Common myeloid progenitor, CD34-positive (primary cell): ENCODE measurements at regions of chr1 and their contacts with region 1.

Region 1: DNA sequence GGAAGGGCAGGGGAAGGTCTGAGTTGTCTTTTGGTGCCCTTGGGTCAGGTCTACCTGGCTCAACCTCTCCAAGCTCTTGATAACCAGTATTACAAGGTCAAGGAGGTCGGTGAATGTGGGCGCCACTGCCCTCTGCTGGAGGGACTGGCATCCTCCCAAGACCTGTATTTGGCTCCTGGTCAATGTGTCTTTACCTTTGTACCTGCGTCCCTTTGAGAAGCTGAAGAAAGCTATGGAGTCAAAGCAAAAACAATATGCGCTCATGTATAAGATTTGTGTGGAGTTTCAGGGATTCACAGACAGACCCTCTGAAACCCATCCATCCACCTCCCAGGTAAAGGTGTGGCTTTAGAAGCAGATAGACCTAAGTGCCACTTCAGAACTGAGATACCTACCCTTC is 61.8 kb upstream of the NBL1 start:
- DNase-seq: peak; percentile 55 to 69 (median 66)
- H3K4me3 ChIP-seq: no peak overlapping the region
- H3K27ac ChIP-seq: no peak overlapping the region
- H3K4me1 ChIP-seq: no peaks in the 10 kb centered on the region
- H3K27me3 ChIP-seq: no peaks in the 10 kb centered on the region

Region 2: DNA sequence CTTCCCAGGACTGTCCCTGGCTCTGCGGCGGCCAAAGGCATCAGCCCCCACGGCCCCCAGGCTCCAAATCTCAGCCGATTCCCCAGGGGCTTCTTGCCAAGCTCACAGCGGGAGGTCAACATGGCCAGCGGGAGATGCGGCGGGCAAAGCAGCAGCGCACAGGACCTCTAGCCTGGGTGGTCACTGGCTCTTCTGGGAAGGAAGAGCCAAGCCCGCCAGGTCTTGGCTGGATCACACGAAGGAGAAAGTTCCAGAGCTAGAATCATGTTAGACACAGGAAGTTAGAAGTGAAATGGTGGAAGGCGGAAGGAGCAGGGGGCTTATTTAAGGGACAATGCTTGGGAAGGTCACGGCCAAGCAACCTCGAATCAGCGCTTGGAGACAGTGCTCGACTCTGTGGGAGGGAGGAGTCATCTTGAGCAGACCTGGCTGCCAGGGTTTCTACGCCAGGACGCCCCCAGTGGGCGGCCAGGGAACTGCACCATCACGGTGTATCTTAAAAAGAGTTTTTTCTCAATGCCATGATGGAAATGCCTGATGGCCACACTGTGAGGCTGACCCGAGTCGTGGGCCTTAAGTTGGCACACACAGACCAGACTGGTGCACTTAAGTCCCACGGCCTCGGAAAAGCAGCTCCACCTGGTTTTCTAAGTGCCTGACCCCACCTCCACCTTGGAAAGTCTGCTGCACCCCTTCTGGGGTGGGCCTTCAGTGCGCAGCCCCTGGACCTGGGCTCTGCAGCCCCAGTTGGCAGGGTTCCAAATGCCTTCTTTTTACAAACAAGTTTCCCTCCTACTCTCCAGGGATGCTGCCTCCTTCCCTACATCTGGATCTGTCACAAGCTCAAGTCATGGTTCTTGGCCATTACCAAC is 240.9 kb before region 1 on chr1:
- CTCF ChIA-PET with region 1: interaction called, 24 read pairs
- POLR2A ChIA-PET with region 1: no interaction called
- DNase-seq: peak; percentile 63 to 80 (median 70)
- H3K4me3 ChIP-seq: no peak overlapping the region
- H3K27ac ChIP-seq: no peak overlapping the region
- H3K4me1 ChIP-seq: peaks cover 0 to 12% (median 5%) of the 10 kb centered on the region in 4 experiments
- H3K27me3 ChIP-seq: no peaks in the 10 kb centered on the region

Region 3: GRCh38 chr1:19468397-19468956 is 113.8 kb before region 1 on chr1:
- CTCF ChIA-PET with region 1: interaction called, 14 read pairs
- POLR2A ChIA-PET with region 1: no interaction called
- DNase-seq: peak in 1 of 3 donors; percentile 63
- H3K4me3 ChIP-seq: peak overlapping the region in 3 of 7 experiments; percentile 14 to 39 (median 33)
- H3K27ac ChIP-seq: peak overlapping the region in 1 of 2 experiments; percentile 74
- H3K4me1 ChIP-seq: peaks cover 38 to 85% (median 77%) of the 10 kb centered on the region in 4 experiments
- H3K27me3 ChIP-seq: no peaks in the 10 kb centered on the region

Region 4: DNA sequence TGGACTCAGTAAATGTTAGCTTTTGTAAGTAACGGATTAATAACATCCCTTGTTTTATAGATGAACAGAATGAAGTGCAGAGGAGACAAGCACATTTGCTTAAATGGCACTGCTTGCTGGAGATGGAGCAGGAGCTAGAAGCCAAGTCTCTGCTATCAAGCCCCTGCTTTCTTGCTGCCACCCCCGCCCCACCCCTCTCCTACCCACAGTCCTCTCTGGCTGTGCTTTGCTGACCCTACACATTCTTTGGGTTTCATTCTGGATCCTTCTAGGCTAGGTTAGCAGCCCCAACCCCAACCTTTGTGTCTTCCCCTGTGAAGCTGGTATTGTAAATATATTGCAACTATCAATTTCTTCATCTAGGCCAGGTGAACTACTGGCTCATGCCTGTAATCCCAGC is 19.5 kb before region 1 on chr1:
- CTCF ChIA-PET with region 1: interaction called, 11 read pairs
- POLR2A ChIA-PET with region 1: no interaction called
- DNase-seq: no peak
- H3K4me3 ChIP-seq: no peak overlapping the region
- H3K27ac ChIP-seq: no peak overlapping the region
- H3K4me1 ChIP-seq: peaks cover 0 to 15% (median 7%) of the 10 kb centered on the region in 4 experiments
- H3K27me3 ChIP-seq: peaks cover 0 to 2% (median 0%) of the 10 kb centered on the region in 5 experiments

Region 5: GRCh38 chr1:19622204-19622603 is 39.9 kb after region 1 on chr1:
- CTCF ChIA-PET with region 1: no interaction called
- POLR2A ChIA-PET with region 1: no interaction called
- DNase-seq: no peak
- H3K4me3 ChIP-seq: no peak overlapping the region
- H3K27ac ChIP-seq: no peak overlapping the region
- H3K4me1 ChIP-seq: no peaks in the 10 kb centered on the region
- H3K27me3 ChIP-seq: no peaks in the 10 kb centered on the region

Region 6: DNA sequence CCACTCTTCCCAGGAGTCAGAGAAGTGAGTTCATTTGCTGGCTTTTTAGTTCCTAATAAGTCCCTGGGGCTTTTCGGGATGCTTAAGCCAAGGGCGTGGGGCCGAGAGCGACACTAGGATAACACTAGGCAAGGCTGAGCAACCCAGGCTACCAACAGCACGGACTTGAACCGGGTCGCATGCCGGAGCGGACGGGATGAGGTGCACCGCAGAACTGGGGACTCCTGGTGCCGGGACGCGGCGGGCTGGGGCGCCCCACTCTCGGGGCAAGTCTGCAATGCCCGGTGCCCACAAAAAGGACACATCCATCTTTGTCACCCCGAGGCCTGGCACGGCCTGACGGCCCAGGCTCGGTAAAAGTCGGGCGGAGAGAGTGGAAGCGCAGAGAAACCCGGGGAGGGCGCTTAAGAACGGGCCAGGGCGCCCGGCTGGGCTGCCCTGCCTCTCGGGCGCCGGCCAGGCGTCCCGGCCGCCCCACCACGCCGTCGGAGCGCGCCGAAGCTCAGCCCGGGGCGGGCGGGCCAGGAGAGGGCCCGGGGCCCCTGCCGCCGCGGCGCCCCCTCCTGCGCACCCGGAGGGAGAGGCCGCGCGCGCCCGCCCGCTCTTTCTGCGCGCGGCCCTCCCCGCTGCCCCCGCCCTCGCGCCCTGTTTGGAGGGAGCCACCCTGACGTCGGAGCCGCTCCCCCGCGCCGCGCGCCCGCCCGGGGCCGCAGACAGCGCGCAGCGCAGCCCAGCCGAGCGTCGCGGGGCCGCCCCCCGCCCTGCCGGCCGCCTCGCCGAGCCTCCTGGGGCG is 61.5 kb after region 1 on chr1 and contains the start of gene NBL1:
- CTCF ChIA-PET with region 1: interaction called, 13 read pairs
- POLR2A ChIA-PET with region 1: no interaction called
- DNase-seq: peak; percentile 55 to 82 (median 82)
- H3K4me3 ChIP-seq: peak within 1 kb of the TSS; percentile 57 to 89 (median 72)
- H3K27ac ChIP-seq: peak within 1 kb of the TSS; percentile 54 to 68
- H3K4me1 ChIP-seq: peaks cover 0 to 51% (median 44%) of the 10 kb centered on the region in 4 experiments
- H3K27me3 ChIP-seq: peaks cover 0 to 12% (median 0%) of the 10 kb centered on the region in 5 experiments